ENCODE measurements at regions of chr7 and their contacts with region 1.

Region 1: GRCh38 chr7:151769188-151769841 is 107.6 kb downstream of the PRKAG2 start:
- DNase-seq: peak; percentile 76
- ATAC-seq: peak; percentile 93
- H3K4me3 Mint-ChIP-seq: peak overlapping the region; percentile 66
- H3K27ac Mint-ChIP-seq: peak overlapping the region; percentile 91
- H3K4me1 Mint-ChIP-seq: peaks cover 68% of the 10 kb centered on the region
- H3K27me3 Mint-ChIP-seq: no peaks in the 10 kb centered on the region
- CTCF ChIP-seq: no peak

Region 2: DNA sequence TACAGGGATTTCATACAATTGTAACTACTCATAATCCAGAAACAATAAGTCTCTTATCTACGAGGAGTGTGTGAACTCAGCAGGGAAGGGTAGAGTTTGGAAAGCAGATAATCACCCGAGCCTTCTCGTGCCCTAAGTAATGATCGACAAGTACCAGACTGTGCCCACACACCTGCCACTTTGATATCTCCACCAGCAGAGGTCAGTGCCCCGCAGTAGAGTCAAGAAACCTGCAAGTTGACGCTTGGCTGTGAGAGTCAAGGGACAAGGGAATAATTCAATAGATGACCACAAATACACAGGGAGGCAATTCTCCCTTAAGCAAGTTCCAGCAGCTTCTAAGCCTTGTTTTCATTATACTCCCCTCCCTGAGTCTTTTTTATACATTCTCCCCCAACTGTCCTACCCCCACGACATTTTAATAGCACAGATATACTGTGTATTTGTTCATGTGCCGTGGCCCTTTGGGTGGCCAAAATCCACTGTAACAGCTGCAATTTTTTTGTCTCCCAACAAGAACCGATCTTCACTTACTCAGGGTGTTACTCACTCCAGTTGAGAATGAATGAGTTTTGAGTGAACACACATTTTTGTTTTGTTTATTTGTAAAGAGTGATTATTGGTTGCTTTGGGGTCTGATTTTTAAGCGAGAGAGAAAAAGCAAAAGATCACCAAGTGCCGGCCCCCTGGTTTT is 142.7 kb before region 1 on chr7:
- CTCF ChIA-PET with region 1: no interaction called
- POLR2A ChIA-PET with region 1: interaction called, 3 read pairs
- intact Hi-C with region 1: loop called (anchors 5 kb)
- DNase-seq: peak; percentile 56
- ATAC-seq: peak; percentile 60
- H3K4me3 Mint-ChIP-seq: no peak overlapping the region
- H3K27ac Mint-ChIP-seq: no peak overlapping the region
- H3K4me1 Mint-ChIP-seq: peaks cover 45% of the 10 kb centered on the region
- H3K27me3 Mint-ChIP-seq: no peaks in the 10 kb centered on the region
- CTCF ChIP-seq: peak; percentile 42